Mammary epithelial cell (primary cell): ENCODE measurements at regions of chr10 and their contacts with region 1.

Region 1: GRCh38 chr10:26881600-26882331 is 21.0 kb upstream of the ABI1 start:
- DNase-seq: peak; percentile 55
- H3K4me3 ChIP-seq: no peak overlapping the region
- H3K27ac ChIP-seq: no peak overlapping the region
- H3K4me1 ChIP-seq: no peaks in the 10 kb centered on the region
- H3K27me3 ChIP-seq: no peaks in the 10 kb centered on the region
- CTCF ChIP-seq: peak; percentile 83 to 89

Region 2: GRCh38 chr10:26334932-26335573 is 546.7 kb before region 1 on chr10:
- CTCF ChIA-PET with region 1: no interaction called
- dilution Hi-C with region 1: no loop called
- in situ Hi-C with region 1: loop called in 1 of 2 experiments (anchors 25 kb)
- intact Hi-C with region 1: loop called (anchors 1 kb)
- DNase-seq: peak; percentile 48
- H3K4me3 ChIP-seq: no peak overlapping the region
- H3K27ac ChIP-seq: no peak overlapping the region
- H3K4me1 ChIP-seq: no peaks in the 10 kb centered on the region
- H3K27me3 ChIP-seq: no peaks in the 10 kb centered on the region
- CTCF ChIP-seq: peak; percentile 68 to 72

Region 3: GRCh38 chr10:26612151-26612915 is 269.4 kb before region 1 on chr10:
- CTCF ChIA-PET with region 1: no interaction called
- dilution Hi-C with region 1: no loop called
- in situ Hi-C with region 1: no loop called
- intact Hi-C with region 1: loop called (anchors 5 kb)
- DNase-seq: peak; percentile 25
- H3K4me3 ChIP-seq: no peak overlapping the region
- H3K27ac ChIP-seq: no peak overlapping the region
- H3K4me1 ChIP-seq: no peaks in the 10 kb centered on the region
- H3K27me3 ChIP-seq: no peaks in the 10 kb centered on the region
- CTCF ChIP-seq: no peak

Region 4: GRCh38 chr10:26839966-26840627 is 41.7 kb before region 1 on chr10:
- CTCF ChIA-PET with region 1: no interaction called
- dilution Hi-C with region 1: no loop called
- in situ Hi-C with region 1: no loop called
- intact Hi-C with region 1: loop called (anchors 1 kb)
- DNase-seq: no peak
- H3K4me3 ChIP-seq: no peak overlapping the region
- H3K27ac ChIP-seq: no peak overlapping the region
- H3K4me1 ChIP-seq: peaks cover 16% of the 10 kb centered on the region
- H3K27me3 ChIP-seq: no peaks in the 10 kb centered on the region
- CTCF ChIP-seq: no peak

Region 5: GRCh38 chr10:26869528-26869927 is 12.2 kb before region 1 on chr10:
- CTCF ChIA-PET with region 1: interaction called, 18 read pairs
- dilution Hi-C with region 1: no loop called
- in situ Hi-C with region 1: no loop called
- intact Hi-C with region 1: no loop called
- DNase-seq: peak; percentile 99
- H3K4me3 ChIP-seq: no peak overlapping the region
- H3K27ac ChIP-seq: peak overlapping the region; percentile 58
- H3K4me1 ChIP-seq: peaks cover 6% of the 10 kb centered on the region
- H3K27me3 ChIP-seq: no peaks in the 10 kb centered on the region
- CTCF ChIP-seq: peak in 1 of 2 donors; percentile 9